MCF 10A (cell line): ENCODE measurements at regions of chr2 and their contacts with region 1.

Region 1: DNA sequence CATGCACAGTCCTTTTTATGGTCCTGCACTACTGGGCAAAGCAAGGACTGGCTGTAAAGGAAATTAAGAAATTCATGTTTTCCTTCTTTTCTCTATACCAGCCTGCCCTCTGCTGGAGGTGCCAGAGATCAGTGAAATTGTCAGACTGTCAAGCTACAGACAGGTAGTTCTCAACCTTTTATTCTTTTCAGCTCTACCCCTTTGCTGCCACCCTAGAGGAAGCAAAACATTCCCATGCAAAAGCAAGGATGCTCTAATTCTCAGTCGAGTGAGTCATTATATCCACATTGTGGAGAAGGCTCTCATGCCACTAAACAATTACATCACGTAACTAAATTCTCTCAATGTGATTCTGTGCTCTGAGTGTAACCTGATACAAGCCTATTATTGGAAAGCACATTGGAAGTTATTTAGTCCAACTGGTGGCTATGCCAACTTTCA is 25.0 kb upstream of the RAPGEF4 start:
- DNase-seq: peak; percentile 80
- H3K4me3 Mint-ChIP-seq: no peak overlapping the region
- H3K27ac Mint-ChIP-seq: no peak overlapping the region
- H3K4me1 Mint-ChIP-seq: peaks cover 8% of the 10 kb centered on the region
- H3K27me3 Mint-ChIP-seq: no peaks in the 10 kb centered on the region
- CTCF ChIP-seq: peak; percentile 81

Region 2: GRCh38 chr2:171574149-171574795 is 1136.3 kb before region 1 on chr2:
- CTCF ChIA-PET with region 1: no interaction called
- POLR2A ChIA-PET with region 1: no interaction called
- intact Hi-C with region 1: loop called (anchors 10 kb)
- DNase-seq: peak; percentile 75
- H3K4me3 Mint-ChIP-seq: no peak overlapping the region
- H3K27ac Mint-ChIP-seq: no peak overlapping the region
- H3K4me1 Mint-ChIP-seq: no peaks in the 10 kb centered on the region
- H3K27me3 Mint-ChIP-seq: no peaks in the 10 kb centered on the region
- CTCF ChIP-seq: peak; percentile 97

Region 3: GRCh38 chr2:172172513-172173173 is 538.0 kb before region 1 on chr2:
- CTCF ChIA-PET with region 1: interaction called, 4 read pairs
- POLR2A ChIA-PET with region 1: no interaction called
- intact Hi-C with region 1: loop called (anchors 5 kb)
- DNase-seq: peak; percentile 74
- H3K4me3 Mint-ChIP-seq: peak overlapping the region; percentile 66
- H3K27ac Mint-ChIP-seq: no peak overlapping the region
- H3K4me1 Mint-ChIP-seq: no peaks in the 10 kb centered on the region
- H3K27me3 Mint-ChIP-seq: no peaks in the 10 kb centered on the region
- CTCF ChIP-seq: peak; percentile 93

Region 4: DNA sequence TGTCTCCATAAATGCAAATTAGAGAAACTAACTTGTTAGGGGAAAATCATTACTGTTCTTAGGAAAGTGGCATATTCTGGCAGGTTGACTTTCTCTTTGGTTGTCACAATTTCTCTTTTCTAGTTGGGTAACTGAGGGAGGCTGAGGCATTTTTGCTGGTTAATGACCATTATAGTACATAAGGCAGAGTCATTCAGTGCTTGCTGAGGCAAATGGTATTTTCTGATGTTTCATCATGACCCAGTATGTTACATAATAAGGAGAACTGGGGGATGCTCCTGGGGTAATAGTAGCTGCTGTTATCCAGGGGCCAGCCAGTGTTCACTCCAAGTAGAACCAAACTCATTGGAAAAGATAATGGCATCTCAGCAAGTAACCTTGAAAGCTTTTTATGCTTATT is 220.9 kb before region 1 on chr2:
- CTCF ChIA-PET with region 1: interaction called, 5 read pairs
- POLR2A ChIA-PET with region 1: no interaction called
- intact Hi-C with region 1: loop called (anchors 5 kb)
- DNase-seq: no peak
- H3K4me3 Mint-ChIP-seq: no peak overlapping the region
- H3K27ac Mint-ChIP-seq: no peak overlapping the region
- H3K4me1 Mint-ChIP-seq: no peaks in the 10 kb centered on the region
- H3K27me3 Mint-ChIP-seq: no peaks in the 10 kb centered on the region
- CTCF ChIP-seq: no peak

Region 5: DNA sequence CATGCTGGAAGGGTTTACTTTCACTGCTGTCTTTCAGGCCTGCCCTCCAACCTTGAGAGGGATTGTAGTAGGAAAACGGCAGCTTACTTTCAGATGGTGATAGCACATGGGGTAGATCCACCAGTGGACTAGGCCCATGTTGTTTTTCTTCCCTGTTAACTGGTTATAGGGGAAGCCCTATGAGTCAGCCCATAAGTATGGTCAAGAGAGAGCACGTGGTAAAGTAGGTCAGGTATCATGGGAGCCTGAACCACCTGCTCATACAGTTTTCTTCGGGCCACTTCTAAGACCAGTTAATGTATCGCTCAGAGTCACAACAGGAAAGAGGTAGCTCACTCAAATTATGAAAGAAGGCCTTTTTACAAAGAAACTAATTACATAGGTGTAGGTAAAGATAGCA is 121.7 kb before region 1 on chr2:
- CTCF ChIA-PET with region 1: interaction called, 172 read pairs
- POLR2A ChIA-PET with region 1: interaction called, 5 read pairs
- intact Hi-C with region 1: loop called (anchors 1 kb)
- DNase-seq: peak; percentile 1
- H3K4me3 Mint-ChIP-seq: no peak overlapping the region
- H3K27ac Mint-ChIP-seq: no peak overlapping the region
- H3K4me1 Mint-ChIP-seq: no peaks in the 10 kb centered on the region
- H3K27me3 Mint-ChIP-seq: no peaks in the 10 kb centered on the region
- CTCF ChIP-seq: no peak

Region 6: DNA sequence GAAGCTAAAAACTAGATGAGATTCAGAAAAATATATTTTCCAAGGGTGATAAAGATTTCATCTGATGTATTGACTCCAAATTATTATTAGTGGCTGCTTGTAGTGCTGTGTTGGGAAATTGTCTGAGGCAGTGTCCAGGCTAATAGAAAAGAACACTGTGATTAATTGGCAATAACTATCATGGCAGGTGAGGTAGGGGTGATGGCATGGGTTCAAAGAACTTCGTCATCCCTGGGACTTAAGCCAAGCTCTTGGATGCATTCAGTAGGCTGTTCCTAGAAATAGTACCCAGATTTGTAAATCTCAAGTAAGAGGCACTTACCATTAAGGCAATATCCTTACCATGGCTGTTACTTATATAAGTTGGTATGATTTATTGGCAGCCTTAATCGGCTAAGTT is 11.9 kb after region 1 on chr2:
- CTCF ChIA-PET with region 1: interaction called, 12 read pairs
- POLR2A ChIA-PET with region 1: no interaction called
- intact Hi-C with region 1: no loop called
- DNase-seq: peak; percentile 72
- H3K4me3 Mint-ChIP-seq: no peak overlapping the region
- H3K27ac Mint-ChIP-seq: no peak overlapping the region
- H3K4me1 Mint-ChIP-seq: peaks cover 6% of the 10 kb centered on the region
- H3K27me3 Mint-ChIP-seq: no peaks in the 10 kb centered on the region
- CTCF ChIP-seq: no peak